ENCODE measurements at regions of chr6 and their contacts with region 1.

Region 1: GRCh38 chr6:159761873-159762680 is at the start of gene ACAT2:
- DNase-seq: peak; percentile 89 to 97
- ATAC-seq: peak; percentile 83 to 93 (median 84)
- H3K4me3 ChIP-seq: peak within 1 kb of the TSS; percentile 98
- H3K4me3 Mint-ChIP-seq: peak within 1 kb of the TSS; percentile 94
- H3K27ac ChIP-seq: peak within 1 kb of the TSS; percentile 98
- H3K27ac Mint-ChIP-seq: peak within 1 kb of the TSS; percentile 64 to 99
- H3K4me1 ChIP-seq: peaks cover 14% of the 10 kb centered on the region
- H3K4me1 Mint-ChIP-seq: peaks cover 30 to 31% of the 10 kb centered on the region in 2 donors
- H3K27me3 ChIP-seq: no peaks in the 10 kb centered on the region
- H3K27me3 Mint-ChIP-seq: no peaks in the 10 kb centered on the region
- CTCF ChIP-seq: no peak
- total RNA-seq, gene ACAT2: 21.7 to 31.7 (median 26.5) TPM

Region 2: GRCh38 chr6:159726918-159727716 is 35.0 kb before region 1 on chr6 and contains the start of gene WTAP:
- intact Hi-C with region 1: loop called (anchors 1 kb)
- DNase-seq: peak; percentile 92 to 99
- ATAC-seq: peak; percentile 85 to 94 (median 85)
- H3K4me3 ChIP-seq: peak within 1 kb of the TSS; percentile 92
- H3K4me3 Mint-ChIP-seq: peak within 1 kb of the TSS; percentile 94
- H3K27ac ChIP-seq: peak within 1 kb of the TSS; percentile 95
- H3K27ac Mint-ChIP-seq: peak within 1 kb of the TSS; percentile 97 to 98
- H3K4me1 ChIP-seq: peaks cover 14% of the 10 kb centered on the region
- H3K4me1 Mint-ChIP-seq: peaks cover 32 to 52% of the 10 kb centered on the region in 2 donors
- H3K27me3 ChIP-seq: no peaks in the 10 kb centered on the region
- H3K27me3 Mint-ChIP-seq: no peaks in the 10 kb centered on the region
- CTCF ChIP-seq: no peak
- total RNA-seq, gene WTAP: 141 to 167 (median 164) TPM

Measured in natural killer cell (primary cell).